ENCODE measurements at regions of chr15 and their contacts with region 1.

Region 1: DNA sequence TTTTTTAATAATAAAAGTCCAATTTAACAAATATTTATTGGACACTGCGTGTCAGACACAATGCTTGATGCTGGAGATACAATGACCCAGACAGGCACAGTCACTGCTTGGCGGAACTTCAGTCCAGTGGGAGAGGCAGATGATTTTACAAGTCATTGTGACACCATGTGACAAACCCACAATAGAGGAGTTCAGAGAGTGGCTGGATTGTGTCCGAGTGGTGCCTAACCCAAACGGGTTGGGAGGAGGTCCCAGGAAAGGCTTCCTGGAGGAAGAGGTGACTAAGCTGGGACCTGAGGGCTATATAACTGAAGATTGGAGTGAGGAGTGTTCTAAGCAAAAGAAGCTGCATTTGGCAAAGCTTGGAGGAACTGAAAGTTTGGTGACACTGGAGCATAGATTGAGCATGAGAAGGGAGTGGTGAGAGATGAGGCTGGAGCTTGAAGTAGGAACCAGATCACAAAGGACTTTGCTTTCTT is 41.4 kb downstream of the CRTC3 start:
- DNase-seq: no peak
- H3K4me3 Mint-ChIP-seq: peak overlapping the region; percentile 57
- H3K27ac Mint-ChIP-seq: peak overlapping the region; percentile 61
- H3K4me1 Mint-ChIP-seq: peaks cover 75% of the 10 kb centered on the region
- H3K27me3 Mint-ChIP-seq: no peaks in the 10 kb centered on the region

Region 2: DNA sequence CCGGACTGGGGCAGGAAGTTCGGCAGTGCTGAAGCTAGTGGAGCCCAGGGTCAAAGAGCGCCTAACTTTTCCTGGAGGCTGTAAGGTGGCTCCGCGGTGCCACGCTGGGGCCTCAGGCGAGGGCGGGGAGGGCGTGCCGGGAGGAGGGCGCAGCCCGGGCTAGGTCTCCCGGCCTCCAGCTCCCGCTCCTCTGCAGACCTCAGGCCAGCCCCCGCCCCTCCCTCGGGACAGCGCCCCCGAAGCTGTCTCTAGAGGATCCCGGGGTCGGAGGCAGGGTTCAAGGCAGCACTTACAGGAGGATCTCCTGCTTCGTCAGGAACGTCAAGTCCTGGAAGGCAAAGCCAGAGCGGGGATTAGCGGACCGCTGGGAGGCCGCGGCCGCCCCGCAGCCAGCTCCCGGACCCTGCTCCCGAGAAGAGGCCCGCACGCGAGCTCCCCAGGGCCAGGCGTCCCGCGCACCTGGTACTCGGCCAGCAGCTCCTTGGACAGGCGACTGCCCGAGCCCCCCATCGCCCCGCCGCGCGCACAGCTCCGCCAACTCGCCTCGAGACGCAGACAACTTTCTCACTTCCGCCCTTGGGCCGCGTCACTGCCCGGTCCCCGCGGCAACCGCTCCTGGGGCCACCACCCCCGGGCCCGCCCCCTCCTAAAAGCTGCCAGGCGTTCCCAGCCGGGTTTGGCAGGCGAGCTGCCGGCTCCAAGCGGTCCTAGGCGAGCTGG is 337.6 kb before region 1 on chr15 and contains the start of gene CIB1:
- intact Hi-C with region 1: no loop called
- DNase-seq: peak; percentile 99
- H3K4me3 Mint-ChIP-seq: peak within 1 kb of the TSS; percentile 99
- H3K27ac Mint-ChIP-seq: peak within 1 kb of the TSS; percentile 95
- H3K4me1 Mint-ChIP-seq: peaks cover 43% of the 10 kb centered on the region
- H3K27me3 Mint-ChIP-seq: no peaks in the 10 kb centered on the region
- total RNA-seq, gene CIB1: 149 and 156 TPM in 2 replicates

Region 3: GRCh38 chr15:90400406-90401314 is 170.4 kb before region 1 on chr15:
- intact Hi-C with region 1: loop called (anchors 10 kb)
- DNase-seq: peak; percentile 92
- H3K4me3 Mint-ChIP-seq: peak overlapping the region; percentile 79
- H3K27ac Mint-ChIP-seq: peak overlapping the region; percentile 97
- H3K4me1 Mint-ChIP-seq: peaks cover 50% of the 10 kb centered on the region
- H3K27me3 Mint-ChIP-seq: no peaks in the 10 kb centered on the region

Region 4: GRCh38 chr15:90560229-90560776 is 10.8 kb before region 1 on chr15:
- intact Hi-C with region 1: loop called (anchors 1 kb)
- DNase-seq: no peak
- H3K4me3 Mint-ChIP-seq: no peak overlapping the region
- H3K27ac Mint-ChIP-seq: no peak overlapping the region
- H3K4me1 Mint-ChIP-seq: peaks cover 75% of the 10 kb centered on the region
- H3K27me3 Mint-ChIP-seq: no peaks in the 10 kb centered on the region

Region 5: GRCh38 chr15:90598031-90598577 is 27.0 kb after region 1 on chr15:
- intact Hi-C with region 1: loop called (anchors 1 kb)
- DNase-seq: peak; percentile 76
- H3K4me3 Mint-ChIP-seq: peak overlapping the region; percentile 53
- H3K27ac Mint-ChIP-seq: peak overlapping the region; percentile 89
- H3K4me1 Mint-ChIP-seq: peaks cover 67% of the 10 kb centered on the region
- H3K27me3 Mint-ChIP-seq: no peaks in the 10 kb centered on the region

Region 6: DNA sequence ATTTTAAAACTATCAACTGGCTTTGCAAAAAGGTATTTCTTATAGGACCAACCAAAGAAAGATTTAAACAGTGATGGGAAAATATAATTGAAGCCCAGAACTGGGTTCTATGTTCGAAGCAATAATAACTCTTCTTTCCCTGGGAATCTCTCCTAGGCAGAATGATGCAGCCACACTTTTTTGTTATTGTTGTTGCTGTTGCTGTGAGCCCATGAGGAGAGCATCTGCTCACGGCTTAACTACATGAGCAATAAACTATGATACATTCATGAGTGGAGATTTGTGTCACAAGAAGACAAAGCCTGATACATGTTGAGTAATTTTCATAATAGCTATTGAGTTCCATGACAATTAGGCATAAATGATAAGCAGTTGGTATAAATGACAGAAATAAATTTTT is 39.1 kb after region 1 on chr15:
- intact Hi-C with region 1: no loop called
- DNase-seq: no peak
- H3K4me3 Mint-ChIP-seq: no peak overlapping the region
- H3K27ac Mint-ChIP-seq: no peak overlapping the region
- H3K4me1 Mint-ChIP-seq: peaks cover 23% of the 10 kb centered on the region
- H3K27me3 Mint-ChIP-seq: no peaks in the 10 kb centered on the region

Region 7: DNA sequence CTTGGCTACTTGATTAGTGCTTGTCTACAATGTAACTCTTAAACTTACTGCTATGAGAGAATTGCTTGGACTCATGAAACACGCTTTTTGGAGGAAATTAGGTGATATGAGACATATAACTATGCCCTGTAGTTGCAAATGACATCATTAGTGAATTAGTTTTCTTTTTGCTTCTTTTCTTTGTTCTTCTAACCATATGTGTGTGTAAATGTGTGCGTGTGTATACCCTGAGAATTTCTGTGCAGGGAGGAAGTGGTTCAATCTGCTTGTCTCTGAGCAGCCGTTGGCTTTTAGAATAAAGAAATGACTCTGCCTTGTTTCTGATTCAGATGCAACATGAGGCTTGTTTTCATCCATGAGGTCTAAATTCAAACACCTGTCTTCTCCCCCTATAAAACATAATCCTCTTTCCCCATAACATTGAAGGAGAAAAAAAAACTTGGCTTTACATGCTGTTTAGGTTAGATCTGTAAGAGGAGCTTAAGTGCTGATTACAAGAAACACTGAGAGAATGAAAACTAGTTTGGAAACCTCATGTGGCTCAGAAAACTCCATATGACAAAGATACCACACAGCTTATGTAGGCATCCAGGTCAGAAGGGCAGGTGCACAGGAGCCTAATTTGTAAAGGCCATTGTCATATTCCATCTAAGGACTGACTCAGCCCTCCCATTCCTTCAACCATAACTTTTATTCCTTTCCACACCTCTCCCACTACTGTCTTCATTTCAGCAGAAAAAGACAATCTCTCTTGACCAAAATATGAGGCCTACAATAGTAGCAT is 115.5 kb after region 1 on chr15:
- intact Hi-C with region 1: loop called (anchors 2 kb)
- DNase-seq: peak; percentile 87
- H3K4me3 Mint-ChIP-seq: peak overlapping the region; percentile 58
- H3K27ac Mint-ChIP-seq: peak overlapping the region; percentile 96
- H3K4me1 Mint-ChIP-seq: peaks cover 47% of the 10 kb centered on the region
- H3K27me3 Mint-ChIP-seq: no peaks in the 10 kb centered on the region

Region 8: DNA sequence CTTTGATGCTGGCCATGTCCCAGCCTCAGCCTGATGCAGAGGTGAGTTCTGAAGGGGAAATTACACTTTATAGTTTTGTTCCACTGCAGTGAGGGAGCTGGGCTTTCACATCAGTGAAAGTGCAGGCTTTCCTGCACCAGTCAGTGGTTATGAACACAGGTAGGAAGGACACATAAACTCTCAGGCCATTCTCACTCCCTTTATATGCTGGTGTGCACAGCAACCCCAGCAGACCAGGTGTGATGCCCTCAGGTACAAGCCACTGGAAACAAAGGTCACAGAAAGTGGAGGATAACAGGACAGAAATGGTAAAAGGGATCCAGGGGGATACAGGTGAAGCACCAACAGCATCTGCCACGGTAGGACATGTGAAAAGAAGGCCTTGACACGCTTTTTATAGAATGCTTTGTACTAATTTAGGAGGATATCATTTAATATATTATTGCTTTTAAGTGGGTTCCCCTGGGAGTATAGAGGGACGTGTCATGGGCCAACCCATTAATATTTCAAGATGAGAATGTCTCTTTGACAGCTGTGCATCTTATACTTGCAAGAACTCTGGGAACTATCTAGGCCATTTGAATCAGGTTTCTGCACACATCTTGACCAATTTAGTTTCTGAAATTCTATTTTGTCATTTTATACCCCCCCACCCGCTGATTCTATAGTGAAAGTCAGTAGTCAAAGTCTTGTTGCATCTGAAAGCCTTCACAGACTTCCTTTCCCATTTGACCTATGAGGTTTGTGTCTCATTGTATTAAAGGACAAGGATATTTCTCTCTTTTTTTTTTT is 121.1 kb after region 1 on chr15:
- intact Hi-C with region 1: loop called (anchors 1 kb)
- DNase-seq: no peak
- H3K4me3 Mint-ChIP-seq: no peak overlapping the region
- H3K27ac Mint-ChIP-seq: peak overlapping the region; percentile 11
- H3K4me1 Mint-ChIP-seq: peaks cover 42% of the 10 kb centered on the region
- H3K27me3 Mint-ChIP-seq: no peaks in the 10 kb centered on the region

Measured in activated CD4-positive, alpha-beta T cell treated with anti-CD3 and anti-CD28 coated beads, Interleukin-2, amount 10 ng/mL, durations not matched to agents 24 days and 14 days (primary cell).